A673 (cell line): ENCODE measurements at regions of chrX and their contacts with region 1.

Region 1: DNA sequence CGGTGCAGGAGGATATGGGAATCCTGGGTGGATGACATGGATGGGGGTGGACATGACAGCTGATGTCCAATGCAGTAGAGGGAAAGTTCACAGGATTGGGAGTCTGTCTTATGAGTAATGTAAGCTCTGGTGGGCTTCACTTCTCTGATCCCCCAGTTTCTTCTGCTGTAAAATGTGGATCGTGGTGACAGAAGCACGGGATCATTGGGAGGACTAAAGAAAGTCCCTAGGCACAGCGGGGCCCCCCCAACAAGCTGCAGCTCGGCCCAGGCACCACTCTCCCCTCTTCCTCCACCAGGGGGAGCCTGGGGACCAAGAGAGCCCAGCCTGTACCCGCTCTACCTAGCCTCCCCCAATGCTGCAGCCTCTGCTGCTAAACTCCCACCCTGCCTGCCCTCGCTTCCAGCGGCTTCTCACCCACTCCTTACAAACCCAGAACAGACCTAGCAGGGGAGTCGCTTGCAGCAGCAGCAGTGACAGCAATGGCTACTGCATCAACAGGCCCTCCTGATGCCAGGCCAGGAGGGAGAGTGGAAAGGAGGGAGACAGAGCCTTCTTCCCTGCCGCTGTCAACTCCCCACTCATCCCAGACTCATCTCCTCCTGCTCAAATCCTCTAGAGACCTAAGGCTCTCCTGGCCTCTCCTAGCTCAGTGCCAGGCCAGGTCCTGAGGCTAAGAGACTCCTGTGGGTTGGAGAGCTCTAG is 36.1 kb upstream of the IQSEC2 start:
- DNase-seq: peak; percentile 82
- H3K4me3 ChIP-seq: no peak overlapping the region
- H3K27ac ChIP-seq: no peak overlapping the region
- H3K4me1 ChIP-seq: peaks cover 15% of the 10 kb centered on the region
- H3K27me3 ChIP-seq: peaks cover 45% of the 10 kb centered on the region
- CTCF ChIP-seq: peak; percentile 93

Region 2: GRCh38 chrX:53211391-53211978 is 106.0 kb before region 1 on chrX:
- CTCF ChIA-PET with region 1: no interaction called
- POLR2A ChIA-PET with region 1: no interaction called
- intact Hi-C with region 1: no loop called
- DNase-seq: no peak
- H3K4me3 ChIP-seq: no peak overlapping the region
- H3K27ac ChIP-seq: no peak overlapping the region
- H3K4me1 ChIP-seq: no peaks in the 10 kb centered on the region
- H3K27me3 ChIP-seq: no peaks in the 10 kb centered on the region
- CTCF ChIP-seq: no peak

Region 3: DNA sequence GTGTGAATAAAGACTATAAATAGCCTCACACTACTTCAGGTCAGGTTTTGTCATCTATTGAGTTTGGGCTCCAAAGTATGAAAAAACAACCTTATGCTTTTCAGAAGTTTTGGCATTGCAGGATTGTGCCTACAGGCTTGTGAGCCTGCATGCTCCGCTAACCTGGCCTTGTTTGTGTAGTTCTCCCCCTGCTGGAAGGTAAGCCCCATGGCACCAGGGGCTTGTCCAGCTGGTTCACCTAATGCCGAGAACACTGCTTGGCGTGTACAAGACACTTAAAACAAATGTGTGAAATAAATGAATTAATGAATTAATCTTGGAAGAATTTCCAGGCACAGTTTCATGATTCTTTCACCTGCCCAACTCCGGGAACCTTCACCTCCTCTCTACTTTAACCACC is 118.5 kb after region 1 on chrX:
- CTCF ChIA-PET with region 1: interaction called, 10 read pairs
- POLR2A ChIA-PET with region 1: no interaction called
- intact Hi-C with region 1: loop called (anchors 2 kb)
- DNase-seq: peak; percentile 83
- H3K4me3 ChIP-seq: no peak overlapping the region
- H3K27ac ChIP-seq: no peak overlapping the region
- H3K4me1 ChIP-seq: peaks cover 2% of the 10 kb centered on the region
- H3K27me3 ChIP-seq: peaks cover 21% of the 10 kb centered on the region
- CTCF ChIP-seq: peak; percentile 88

Region 4: DNA sequence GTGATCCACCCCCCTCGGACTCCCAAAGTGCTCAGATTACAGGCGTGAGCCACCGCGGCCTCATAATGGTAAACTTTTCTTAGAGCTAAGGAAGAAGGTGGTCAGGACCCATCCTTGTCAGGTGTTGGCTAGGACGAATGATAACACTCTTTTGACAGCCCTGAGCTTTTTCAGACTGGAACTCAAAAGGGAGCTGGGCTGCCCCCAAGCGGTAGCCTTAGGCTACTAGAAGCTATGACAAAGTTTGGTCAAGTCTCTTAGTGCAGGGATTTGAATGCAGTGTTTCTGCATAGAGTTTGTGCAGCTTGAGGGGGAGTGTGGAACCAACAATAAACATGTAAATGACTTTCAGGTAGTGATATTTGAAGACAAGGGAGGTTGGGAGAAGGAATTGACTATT is 128.5 kb after region 1 on chrX:
- CTCF ChIA-PET with region 1: interaction called, 17 read pairs
- POLR2A ChIA-PET with region 1: no interaction called
- intact Hi-C with region 1: loop called (anchors 2 kb)
- DNase-seq: peak; percentile 62
- H3K4me3 ChIP-seq: no peak overlapping the region
- H3K27ac ChIP-seq: no peak overlapping the region
- H3K4me1 ChIP-seq: peaks cover 4% of the 10 kb centered on the region
- H3K27me3 ChIP-seq: peaks cover 8% of the 10 kb centered on the region
- CTCF ChIP-seq: peak; percentile 80

Region 5: GRCh38 chrX:53481816-53482465 is 164.4 kb after region 1 on chrX:
- CTCF ChIA-PET with region 1: interaction called, 7 read pairs
- POLR2A ChIA-PET with region 1: no interaction called
- intact Hi-C with region 1: loop called (anchors 2 kb)
- DNase-seq: peak; percentile 74
- H3K4me3 ChIP-seq: no peak overlapping the region
- H3K27ac ChIP-seq: no peak overlapping the region
- H3K4me1 ChIP-seq: no peaks in the 10 kb centered on the region
- H3K27me3 ChIP-seq: no peaks in the 10 kb centered on the region
- CTCF ChIP-seq: peak; percentile 81

Region 6: GRCh38 chrX:54639346-54640102 is 1322.0 kb after region 1 on chrX:
- CTCF ChIA-PET with region 1: no interaction called
- POLR2A ChIA-PET with region 1: interaction called, 10 read pairs
- intact Hi-C with region 1: no loop called
- DNase-seq: peak; percentile 97
- H3K4me3 ChIP-seq: peak overlapping the region; percentile 47
- H3K27ac ChIP-seq: peak overlapping the region; percentile 93
- H3K4me1 ChIP-seq: no peaks in the 10 kb centered on the region
- H3K27me3 ChIP-seq: no peaks in the 10 kb centered on the region
- CTCF ChIP-seq: peak; percentile 52

Region 7: GRCh38 chrX:55057675-55058249 is 1740.2 kb after region 1 on chrX:
- CTCF ChIA-PET with region 1: no interaction called
- POLR2A ChIA-PET with region 1: no interaction called
- intact Hi-C with region 1: loop called (anchors 10 kb)
- DNase-seq: peak; percentile 37
- H3K4me3 ChIP-seq: no peak overlapping the region
- H3K27ac ChIP-seq: no peak overlapping the region
- H3K4me1 ChIP-seq: no peaks in the 10 kb centered on the region
- H3K27me3 ChIP-seq: no peaks in the 10 kb centered on the region
- CTCF ChIP-seq: peak; percentile 83